AG04449 (cell line): ENCODE measurements at regions of chr5 and their contacts with region 1.

Region 1: GRCh38 chr5:149561848-149562247 is 10.6 kb upstream of the CSNK1A1 start:
- DNase-seq: peak; percentile 82
- H3K4me3 ChIP-seq: no peak overlapping the region
- CTCF ChIP-seq: no peak

Region 2: GRCh38 chr5:149317281-149318048 is 244.4 kb before region 1 on chr5:
- CTCF ChIA-PET with region 1: interaction called, 18 read pairs
- POLR2A ChIA-PET with region 1: interaction called, 3 read pairs
- DNase-seq: no peak
- H3K4me3 ChIP-seq: no peak overlapping the region
- CTCF ChIP-seq: peak; percentile 54

Region 3: GRCh38 chr5:149434162-149435014 is 127.5 kb before region 1 on chr5:
- CTCF ChIA-PET with region 1: interaction called, 678 read pairs
- POLR2A ChIA-PET with region 1: interaction called, 14 read pairs
- DNase-seq: no peak
- H3K4me3 ChIP-seq: no peak overlapping the region
- CTCF ChIP-seq: peak; percentile 86

Region 4: DNA sequence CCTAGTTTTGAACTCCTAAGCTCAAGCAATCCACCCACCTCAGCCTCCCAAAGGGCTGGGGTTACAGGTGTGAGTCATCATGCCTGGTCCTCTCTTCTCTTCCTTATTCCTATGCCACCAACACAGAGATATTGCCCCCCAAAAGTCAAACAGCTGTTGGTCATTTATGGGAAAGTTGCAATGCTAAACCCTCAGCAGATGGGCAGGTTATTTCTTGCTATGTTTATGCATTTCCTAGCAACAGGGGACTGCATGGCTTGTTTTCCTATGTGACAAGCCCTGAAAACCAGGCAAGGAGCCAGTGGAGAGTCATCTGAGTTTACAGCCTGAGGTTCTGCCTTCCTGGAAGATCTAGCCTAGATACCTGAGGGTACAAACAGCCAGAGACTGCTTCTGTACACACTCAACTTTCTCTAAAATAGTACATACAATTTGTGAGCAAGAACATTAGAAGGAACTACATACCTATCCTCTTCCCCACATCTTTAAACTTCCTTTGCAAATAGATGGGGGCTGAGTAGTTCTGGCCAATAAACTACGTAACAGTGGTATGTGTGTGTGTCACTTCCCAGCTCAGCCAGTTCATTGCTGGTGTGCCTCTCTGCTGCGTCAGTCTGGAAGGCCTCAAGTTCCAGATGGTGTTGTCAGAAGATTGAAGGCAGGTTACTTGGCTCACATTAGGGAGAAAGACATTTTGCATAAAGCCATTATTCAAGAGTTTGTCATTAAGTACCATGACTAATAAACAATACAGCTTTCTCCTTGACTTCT is 76.0 kb before region 1 on chr5:
- CTCF ChIA-PET with region 1: interaction called, 4 read pairs
- POLR2A ChIA-PET with region 1: interaction called, 14 read pairs
- DNase-seq: peak; percentile 100
- H3K4me3 ChIP-seq: no peak overlapping the region
- CTCF ChIP-seq: no peak

Region 5: GRCh38 chr5:149543361-149544027 is 18.4 kb before region 1 on chr5:
- CTCF ChIA-PET with region 1: no interaction called
- POLR2A ChIA-PET with region 1: no interaction called
- DNase-seq: no peak
- H3K4me3 ChIP-seq: no peak overlapping the region
- CTCF ChIP-seq: no peak

Region 6: GRCh38 chr5:149576021-149576420 is 14.2 kb after region 1 on chr5:
- CTCF ChIA-PET with region 1: interaction called, 18 read pairs
- POLR2A ChIA-PET with region 1: no interaction called
- DNase-seq: no peak
- H3K4me3 ChIP-seq: no peak overlapping the region
- CTCF ChIP-seq: no peak

Region 7: GRCh38 chr5:149667084-149667828 is 105.4 kb after region 1 on chr5:
- CTCF ChIA-PET with region 1: no interaction called
- POLR2A ChIA-PET with region 1: no interaction called
- DNase-seq: no peak
- H3K4me3 ChIP-seq: no peak overlapping the region
- CTCF ChIP-seq: peak; percentile 54